ENCODE measurements at regions of chr7 and their contacts with region 1.

Region 1: DNA sequence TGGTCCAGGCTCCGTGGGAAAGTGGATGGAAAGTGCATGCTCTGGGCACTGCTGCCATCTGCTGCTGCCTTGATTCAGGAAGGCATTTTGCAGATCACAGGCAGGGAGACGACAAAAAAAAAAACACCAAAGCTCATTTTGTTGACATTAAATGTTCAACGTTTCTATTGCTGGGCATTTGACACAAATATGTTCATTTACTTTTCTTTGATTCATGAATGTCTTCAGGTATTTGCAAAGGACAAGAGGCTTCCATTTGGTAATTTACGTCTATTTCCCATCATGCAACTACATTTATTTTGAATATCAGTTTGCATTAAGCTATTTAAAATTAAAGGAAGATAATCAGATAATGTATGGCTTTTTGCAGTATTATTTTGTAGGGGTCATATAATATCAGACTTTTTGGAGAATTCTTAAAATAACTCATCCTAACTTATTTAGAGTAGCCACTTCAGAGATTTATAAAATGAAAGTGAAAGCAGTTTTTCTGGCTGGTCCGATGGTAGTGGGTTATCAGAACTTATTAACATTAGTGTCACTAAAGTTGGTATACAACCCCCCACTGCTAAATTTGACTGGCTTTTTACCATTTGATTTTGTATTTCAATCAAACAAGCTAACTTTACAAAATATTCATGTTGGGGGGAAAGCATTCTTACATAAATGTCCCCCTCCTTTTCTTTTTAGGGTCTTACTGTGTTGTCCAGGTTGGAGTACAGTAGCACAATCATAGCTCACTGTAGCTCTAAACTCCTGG is 65.3 kb downstream of the PDIA4 start:
- DNase-seq: peak; percentile 70 to 74 (median 71)
- ATAC-seq: peak; percentile 76
- H3K4me3 ChIP-seq: peak overlapping the region; percentile 11 to 46
- H3K27ac ChIP-seq: peak overlapping the region; percentile 49 to 80 (median 60)
- H3K4me1 ChIP-seq: peaks cover 24% of the 10 kb centered on the region
- H3K27me3 ChIP-seq: no peaks in the 10 kb centered on the region
- CTCF ChIP-seq: peak; percentile 7 to 93 (median 58)
- POLR2A ChIP-seq: no peak

Region 2: DNA sequence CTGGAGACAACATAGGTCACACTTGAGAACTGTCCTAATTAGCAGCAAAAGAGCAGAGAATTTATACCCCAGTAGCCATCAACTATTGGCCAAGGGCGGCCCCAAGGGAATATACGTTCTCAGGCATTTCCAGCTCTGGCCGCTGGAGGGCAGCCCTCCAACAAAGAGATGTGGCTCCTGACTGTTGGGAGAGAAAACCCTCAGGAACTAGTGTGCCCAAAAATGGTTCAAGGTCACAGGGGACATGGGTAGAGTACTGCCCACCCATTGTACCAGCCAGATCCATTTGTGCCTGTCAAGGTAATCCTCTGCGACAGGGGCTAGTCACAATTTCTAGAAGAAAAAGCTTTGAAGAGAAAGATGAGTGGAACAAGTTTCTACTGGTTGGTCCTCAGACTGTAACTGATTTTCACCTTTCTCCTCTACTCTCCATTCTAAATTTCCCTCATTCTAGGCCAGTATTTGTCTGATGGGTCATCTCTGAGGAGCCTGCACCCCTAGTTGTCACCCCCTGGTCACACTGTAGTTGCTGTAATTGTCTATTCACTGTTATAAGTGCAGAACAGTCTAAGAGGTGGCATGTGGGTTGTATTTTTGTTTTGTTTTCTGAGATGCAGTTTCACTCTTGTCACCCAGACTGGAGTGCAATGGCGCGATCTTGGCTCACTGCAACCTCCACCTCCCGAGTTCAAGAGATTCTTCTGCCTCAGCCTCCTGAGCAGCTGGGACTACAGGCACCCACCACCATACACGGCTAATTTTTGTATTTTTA is 387.2 kb before region 1 on chr7:
- intact Hi-C with region 1: loop called (anchors 5 kb)
- DNase-seq: peak; percentile 64 to 82 (median 69)
- ATAC-seq: peak; percentile 65
- H3K4me3 ChIP-seq: no peak overlapping the region
- H3K27ac ChIP-seq: no peak overlapping the region
- H3K4me1 ChIP-seq: no peaks in the 10 kb centered on the region
- H3K27me3 ChIP-seq: no peaks in the 10 kb centered on the region
- CTCF ChIP-seq: peak; percentile 60 to 80 (median 67)
- POLR2A ChIP-seq: no peak